GM12878 (cell line): ENCODE measurements at regions of chr12 and their contacts with region 1.

Region 1: GRCh38 chr12:110531741-110532333 is 29.7 kb downstream of the RAD9B start:
- DNase-seq: peak; percentile 96
- ATAC-seq: peak; percentile 90
- H3K4me3 ChIP-seq: peak overlapping the region; percentile 18
- H3K27ac ChIP-seq: peak overlapping the region; percentile 80
- H3K4me1 ChIP-seq: peaks cover 71% of the 10 kb centered on the region
- H3K27me3 ChIP-seq: no peaks in the 10 kb centered on the region
- CTCF ChIP-seq: no peak
- EP300 ChIP-seq: peak; percentile 95 to 96
- POLR2A ChIP-seq: no peak; the same call in 1 of the 2 replicates
- RAD21 ChIP-seq: no peak

Region 2: DNA sequence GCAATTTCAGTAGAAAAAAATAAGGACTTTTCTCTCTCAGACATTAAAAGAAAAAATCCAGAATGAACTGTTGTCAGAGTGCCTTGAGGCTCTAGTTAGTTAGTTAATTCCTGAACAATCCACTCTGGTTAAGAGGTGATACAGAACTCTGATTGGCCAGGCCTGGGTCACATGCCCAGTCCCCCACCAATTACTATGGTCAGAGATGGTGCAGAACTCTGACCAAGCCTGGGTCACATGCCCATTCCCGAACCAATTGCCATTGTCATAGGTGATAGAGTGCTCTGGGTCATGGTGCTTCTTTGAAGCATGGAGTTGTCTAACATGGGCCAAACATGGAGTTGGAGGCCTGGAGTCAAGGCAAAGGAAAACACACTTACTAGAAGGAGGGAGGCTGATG is 1195.2 kb before region 1 on chr12:
- CTCF ChIA-PET with region 1: no interaction called
- POLR2A ChIA-PET with region 1: no interaction called
- RAD21 ChIA-PET with region 1: no interaction called
- SMC1A ChIA-PET with region 1: no interaction called
- in situ Hi-C with region 1: no loop called
- intact Hi-C with region 1: no loop called
- DNase-seq: no peak
- ATAC-seq: no peak
- H3K4me3 ChIP-seq: no peak overlapping the region
- H3K27ac ChIP-seq: no peak overlapping the region
- H3K4me1 ChIP-seq: no peaks in the 10 kb centered on the region
- H3K27me3 ChIP-seq: no peaks in the 10 kb centered on the region; a peak in 1 of 4 replicates
- CTCF ChIP-seq: no peak
- EP300 ChIP-seq: no peak
- POLR2A ChIP-seq: no peak
- RAD21 ChIP-seq: no peak

Region 3: DNA sequence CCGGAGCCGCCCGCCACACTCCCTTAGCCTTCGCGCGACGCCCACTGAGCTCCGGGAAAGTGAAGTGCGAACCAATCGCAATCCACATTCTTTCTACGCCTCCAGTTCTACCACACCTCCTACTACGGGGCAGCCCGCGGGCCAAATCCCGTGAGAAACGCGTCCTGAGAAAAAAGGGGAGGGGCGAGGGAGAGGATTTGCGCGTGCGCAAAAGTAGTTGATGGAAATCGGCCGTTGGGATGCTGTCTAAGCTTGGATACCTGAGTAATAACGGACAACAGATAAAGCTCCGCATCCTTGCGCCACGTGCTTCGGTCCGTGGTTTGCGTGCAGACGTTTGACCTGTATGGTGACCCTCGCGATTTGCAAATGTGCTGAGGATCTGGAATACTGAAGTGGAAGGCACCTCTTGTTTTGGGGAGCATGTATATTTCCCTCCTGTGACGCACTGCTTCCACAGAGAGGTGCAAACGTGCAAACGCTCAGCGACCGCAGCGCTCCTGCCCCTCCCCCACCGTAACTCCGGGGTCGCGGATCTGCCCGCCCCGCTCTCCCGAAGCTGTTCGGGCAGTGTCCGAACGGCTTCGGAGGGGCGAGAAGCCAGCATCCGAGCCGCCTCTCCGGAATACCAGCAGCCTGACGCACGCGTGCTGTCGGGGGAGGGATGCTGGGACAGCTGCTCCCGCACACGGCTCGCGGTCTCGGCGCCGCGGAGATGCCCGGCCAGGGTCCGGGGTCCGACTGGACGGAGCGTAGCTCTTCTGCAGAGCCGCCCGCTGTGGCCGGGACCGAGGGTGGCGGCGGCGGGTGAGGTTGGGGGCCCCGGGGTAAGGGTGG is 63.4 kb before region 1 on chr12 and contains the starts of genes FAM216A and GPN3:
- CTCF ChIA-PET with region 1: interaction called, 8 read pairs
- POLR2A ChIA-PET with region 1: interaction called, 4 read pairs
- RAD21 ChIA-PET with region 1: interaction called, 17 read pairs
- SMC1A ChIA-PET with region 1: interaction called, 5 read pairs
- in situ Hi-C with region 1: no loop called
- intact Hi-C with region 1: no loop called
- DNase-seq: peak; percentile 96
- ATAC-seq: peak; percentile 88
- H3K4me3 ChIP-seq: peak within 1 kb of the TSS; percentile 73
- H3K27ac ChIP-seq: peak within 1 kb of the TSS; percentile 91
- H3K4me1 ChIP-seq: peaks cover 6% of the 10 kb centered on the region
- H3K27me3 ChIP-seq: no peaks in the 10 kb centered on the region
- CTCF ChIP-seq: no peak
- EP300 ChIP-seq: no peak
- POLR2A ChIP-seq: peak; percentile 91
- RAD21 ChIP-seq: no peak
- polyA plus RNA-seq, gene FAM216A: 15.0 to 36.0 TPM
- polyA plus RNA-seq, gene GPN3: 76.9 to 78.7 TPM

Region 4: DNA sequence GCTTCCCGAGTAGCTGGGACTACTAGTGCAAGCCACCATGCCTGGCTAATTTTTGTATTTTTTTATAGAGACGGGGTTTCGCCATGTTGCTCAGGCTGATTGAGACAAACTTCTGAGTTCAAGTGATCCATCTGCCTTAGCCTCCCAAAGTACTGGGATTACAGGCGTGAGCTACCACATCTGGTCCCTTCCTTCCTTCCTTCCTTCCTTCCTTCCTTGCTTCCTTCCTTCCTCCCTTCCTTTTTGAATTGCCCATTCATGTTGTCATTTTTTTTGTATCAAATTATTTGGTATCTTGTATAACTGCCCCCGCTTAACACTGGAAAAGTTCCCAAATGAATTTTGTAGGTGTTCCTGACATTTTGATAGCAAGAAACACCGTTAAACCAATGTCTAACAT is 18.0 kb before region 1 on chr12:
- CTCF ChIA-PET with region 1: interaction called, 34 read pairs
- POLR2A ChIA-PET with region 1: interaction called, 13 read pairs
- RAD21 ChIA-PET with region 1: interaction called, 30 read pairs
- SMC1A ChIA-PET with region 1: interaction called, 162 read pairs
- in situ Hi-C with region 1: no loop called
- intact Hi-C with region 1: no loop called
- DNase-seq: no peak
- ATAC-seq: no peak
- H3K4me3 ChIP-seq: no peak overlapping the region
- H3K27ac ChIP-seq: no peak overlapping the region
- H3K4me1 ChIP-seq: no peaks in the 10 kb centered on the region
- H3K27me3 ChIP-seq: no peaks in the 10 kb centered on the region
- CTCF ChIP-seq: no peak
- EP300 ChIP-seq: no peak
- POLR2A ChIP-seq: no peak
- RAD21 ChIP-seq: no peak

Region 5: GRCh38 chr12:110548678-110549077 is 16.8 kb after region 1 on chr12:
- CTCF ChIA-PET with region 1: interaction called, 19 read pairs
- POLR2A ChIA-PET with region 1: interaction called, 55 read pairs
- RAD21 ChIA-PET with region 1: interaction called, 109 read pairs
- SMC1A ChIA-PET with region 1: interaction called, 116 read pairs
- in situ Hi-C with region 1: no loop called
- intact Hi-C with region 1: no loop called
- DNase-seq: no peak
- ATAC-seq: no peak
- H3K4me3 ChIP-seq: no peak overlapping the region
- H3K27ac ChIP-seq: peak overlapping the region; percentile 31; the same call in 1 of the 2 replicates
- H3K4me1 ChIP-seq: peaks cover 16% of the 10 kb centered on the region
- H3K27me3 ChIP-seq: no peaks in the 10 kb centered on the region
- CTCF ChIP-seq: no peak
- EP300 ChIP-seq: no peak
- POLR2A ChIP-seq: no peak
- RAD21 ChIP-seq: no peak

Region 6: GRCh38 chr12:110577717-110578521 is 46.1 kb after region 1 on chr12:
- CTCF ChIA-PET with region 1: interaction called, 14 read pairs
- POLR2A ChIA-PET with region 1: interaction called, 122 read pairs
- RAD21 ChIA-PET with region 1: interaction called, 73 read pairs
- SMC1A ChIA-PET with region 1: interaction called, 308 read pairs
- in situ Hi-C with region 1: no loop called
- intact Hi-C with region 1: loop called (anchors 2 kb)
- DNase-seq: peak; percentile 84
- ATAC-seq: peak; percentile 45
- H3K4me3 ChIP-seq: peak overlapping the region; percentile 82
- H3K27ac ChIP-seq: peak overlapping the region; percentile 95
- H3K4me1 ChIP-seq: peaks cover 12% of the 10 kb centered on the region
- H3K27me3 ChIP-seq: no peaks in the 10 kb centered on the region
- CTCF ChIP-seq: no peak
- EP300 ChIP-seq: peak; percentile 67 to 76; a peak in 2 of 4 replicates
- POLR2A ChIP-seq: no peak
- RAD21 ChIP-seq: no peak

Region 7: DNA sequence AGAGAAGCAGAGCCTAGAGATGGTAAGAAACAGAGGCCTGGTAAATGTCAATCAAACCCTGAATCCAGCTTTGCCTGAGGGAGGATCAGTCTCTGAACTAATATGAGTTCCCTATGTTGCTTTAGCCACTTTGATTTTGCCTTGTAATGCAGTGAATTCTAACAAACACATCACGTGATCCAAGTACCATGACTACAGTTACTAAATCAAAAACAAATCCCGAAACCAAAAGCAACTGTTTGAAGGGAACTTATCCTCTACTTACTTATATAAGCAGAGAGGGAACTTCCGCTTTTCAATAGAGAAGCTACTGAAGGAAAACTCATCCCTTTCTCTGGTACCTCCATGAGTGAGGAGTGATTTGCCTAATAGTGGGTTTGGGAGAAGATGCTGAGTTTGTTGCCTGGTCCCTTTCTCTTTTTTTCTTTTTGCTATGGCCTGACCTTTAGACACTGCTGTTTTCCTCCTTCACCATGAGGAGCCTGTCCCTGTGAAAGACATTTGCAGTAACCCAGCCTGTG is 59.0 kb after region 1 on chr12:
- CTCF ChIA-PET with region 1: interaction called, 4 read pairs
- POLR2A ChIA-PET with region 1: interaction called, 8 read pairs
- RAD21 ChIA-PET with region 1: interaction called, 14 read pairs
- SMC1A ChIA-PET with region 1: interaction called, 18 read pairs
- in situ Hi-C with region 1: no loop called
- intact Hi-C with region 1: no loop called
- DNase-seq: peak; percentile 79
- ATAC-seq: peak; percentile 93
- H3K4me3 ChIP-seq: peak overlapping the region; percentile 42; the same call in 1 of the 2 replicates
- H3K27ac ChIP-seq: peak overlapping the region; percentile 85
- H3K4me1 ChIP-seq: peaks cover 15% of the 10 kb centered on the region
- H3K27me3 ChIP-seq: no peaks in the 10 kb centered on the region
- CTCF ChIP-seq: no peak
- EP300 ChIP-seq: peak in 1 of 2 experiments; percentile 81; a peak in 2 of 4 replicates
- POLR2A ChIP-seq: no peak
- RAD21 ChIP-seq: no peak

Region 8: GRCh38 chr12:110790301-110790700 is 258.5 kb after region 1 on chr12:
- CTCF ChIA-PET with region 1: no interaction called
- POLR2A ChIA-PET with region 1: no interaction called
- RAD21 ChIA-PET with region 1: no interaction called
- SMC1A ChIA-PET with region 1: no interaction called
- in situ Hi-C with region 1: no loop called
- intact Hi-C with region 1: no loop called
- DNase-seq: no peak
- ATAC-seq: no peak
- H3K4me3 ChIP-seq: no peak overlapping the region
- H3K27ac ChIP-seq: no peak overlapping the region
- H3K4me1 ChIP-seq: peaks cover 8% of the 10 kb centered on the region
- H3K27me3 ChIP-seq: no peaks in the 10 kb centered on the region
- CTCF ChIP-seq: no peak
- EP300 ChIP-seq: no peak
- POLR2A ChIP-seq: no peak
- RAD21 ChIP-seq: no peak

Region 9: GRCh38 chr12:110846615-110847566 is 315.1 kb after region 1 on chr12 and contains the start of gene CCDC63:
- CTCF ChIA-PET with region 1: no interaction called
- POLR2A ChIA-PET with region 1: no interaction called
- RAD21 ChIA-PET with region 1: no interaction called
- SMC1A ChIA-PET with region 1: no interaction called
- in situ Hi-C with region 1: no loop called
- intact Hi-C with region 1: no loop called
- DNase-seq: no peak
- ATAC-seq: peak; percentile 72
- H3K4me3 ChIP-seq: peak within 1 kb of the TSS; percentile 36; the same call in 1 of the 2 replicates
- H3K27ac ChIP-seq: no peak within 1 kb of the TSS
- H3K4me1 ChIP-seq: no peaks in the 10 kb centered on the region
- H3K27me3 ChIP-seq: peaks cover 5 to 13% of the 10 kb centered on the region in 2 experiments
- CTCF ChIP-seq: peak; percentile 33 to 44 (median 42); a peak in 3 of 6 replicates
- EP300 ChIP-seq: no peak
- POLR2A ChIP-seq: no peak
- RAD21 ChIP-seq: no peak
- polyA plus RNA-seq, gene CCDC63: not detected